ENCODE measurements at regions of chr11 and their contacts with region 1.

Region 1: DNA sequence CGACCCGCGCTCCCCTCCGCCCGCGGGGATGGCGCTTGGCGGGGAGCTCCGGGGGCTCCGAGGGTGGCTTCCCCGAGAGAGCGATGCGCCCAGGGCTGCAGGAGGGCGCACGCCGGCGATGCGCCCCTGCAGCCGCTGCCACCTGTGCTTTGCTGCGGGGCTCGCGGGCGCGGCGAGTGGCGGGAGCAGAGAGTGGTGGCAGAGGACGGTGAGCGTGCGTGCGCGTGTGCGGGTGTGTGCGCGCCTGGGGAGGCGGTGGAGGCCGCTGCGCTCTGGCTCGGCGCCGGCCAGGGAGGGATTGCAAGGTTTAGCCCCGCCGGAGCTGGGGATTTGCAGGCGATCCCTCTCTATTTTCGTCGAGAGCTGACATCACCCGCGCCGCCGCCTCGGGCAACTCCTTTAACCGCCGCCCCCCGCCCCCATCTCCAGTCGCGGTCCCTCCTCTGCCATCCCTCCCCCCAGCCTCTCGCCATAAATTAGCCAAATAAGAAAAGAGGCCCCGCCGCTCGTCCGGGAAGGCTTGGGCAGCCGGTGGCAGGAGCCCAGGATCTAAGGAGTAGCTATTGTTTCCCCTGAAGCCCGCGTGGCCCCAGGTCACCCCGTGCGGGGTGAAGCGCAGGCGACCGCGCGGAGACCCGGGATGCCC is at the start of gene SLC1A2:
- DNase-seq: no peak
- ATAC-seq: peak; percentile 25
- total RNA-seq, gene SLC1A2: 0.98 TPM

Region 2: GRCh38 chr11:35507688-35508087 is 88.4 kb after region 1 on chr11:
- intact Hi-C with region 1: loop called (anchors 2 kb)
- DNase-seq: no peak
- ATAC-seq: no peak

Measured in sciatic nerve (tissue), 2 donors.